Activated B cell treated with CpG ODN at 0.5 μM for 24 hours (primary cell): ENCODE measurements at regions of chr7 and their contacts with region 1.

Region 1: GRCh38 chr7:142782922-142783900 is 12.4 kb downstream of the PRSS2 start:
- DNase-seq: peak; percentile 71
- ATAC-seq: peak; percentile 91
- H3K4me3 Mint-ChIP-seq: peak overlapping the region; percentile 86
- H3K27ac Mint-ChIP-seq: peak overlapping the region; percentile 91
- H3K4me1 Mint-ChIP-seq: peaks cover 34% of the 10 kb centered on the region
- H3K27me3 Mint-ChIP-seq: no peaks in the 10 kb centered on the region
- CTCF ChIP-seq: peak; percentile 27

Region 2: DNA sequence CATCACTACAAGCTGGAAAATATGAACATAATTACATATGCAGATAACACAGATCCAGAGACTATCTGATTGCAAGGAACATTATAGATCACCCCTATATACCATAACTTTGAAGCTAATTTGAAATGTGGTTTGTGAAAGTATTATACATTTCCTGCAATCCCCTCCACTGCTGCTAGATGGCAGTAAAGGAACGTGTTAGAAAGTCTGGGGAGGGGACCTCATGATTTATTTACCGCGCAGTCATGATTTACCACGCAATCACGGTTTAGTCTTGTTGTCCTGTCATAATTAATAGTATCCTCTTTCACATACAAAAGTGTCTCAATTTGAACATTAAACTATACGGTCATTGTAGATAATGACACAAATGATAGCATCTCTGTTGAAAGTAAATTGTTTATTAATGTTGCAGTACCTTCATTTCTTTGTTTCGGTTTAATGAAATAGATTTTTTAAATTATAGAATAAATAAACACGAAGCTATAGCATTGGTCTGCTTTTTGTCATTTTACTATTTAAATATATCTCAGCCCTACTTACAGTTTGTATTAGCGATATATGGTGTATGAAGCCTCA is 179.3 kb before region 1 on chr7:
- CTCF ChIA-PET with region 1: interaction called, 14 read pairs
- POLR2A ChIA-PET with region 1: interaction called, 7 read pairs
- intact Hi-C with region 1: loop called (anchors 1 kb)
- DNase-seq: no peak
- ATAC-seq: no peak
- H3K4me3 Mint-ChIP-seq: no peak overlapping the region
- H3K27ac Mint-ChIP-seq: no peak overlapping the region
- H3K4me1 Mint-ChIP-seq: peaks cover 3% of the 10 kb centered on the region
- H3K27me3 Mint-ChIP-seq: peaks cover 35% of the 10 kb centered on the region
- CTCF ChIP-seq: peak; percentile 64

Region 3: DNA sequence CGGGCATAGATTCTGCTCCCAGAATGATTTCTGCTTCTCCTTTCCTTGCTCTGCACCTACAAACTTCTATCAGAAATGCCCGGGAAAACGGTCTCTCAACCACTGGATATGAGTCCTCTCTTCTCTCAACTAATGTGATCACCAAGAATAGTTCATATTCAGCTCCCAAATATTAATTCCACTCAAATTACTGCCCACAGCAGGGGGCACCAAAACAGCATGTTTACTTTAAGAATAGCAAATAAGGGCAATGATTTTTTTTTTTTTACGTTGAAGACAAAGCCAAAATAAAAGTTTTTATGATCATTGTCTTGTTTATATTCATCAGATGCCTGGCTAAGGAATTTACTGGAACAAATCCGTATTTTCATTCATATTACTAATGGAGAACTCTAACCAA is 128.8 kb before region 1 on chr7:
- CTCF ChIA-PET with region 1: interaction called, 7 read pairs
- POLR2A ChIA-PET with region 1: no interaction called
- intact Hi-C with region 1: loop called (anchors 1 kb)
- DNase-seq: no peak
- ATAC-seq: no peak
- H3K4me3 Mint-ChIP-seq: no peak overlapping the region
- H3K27ac Mint-ChIP-seq: no peak overlapping the region
- H3K4me1 Mint-ChIP-seq: no peaks in the 10 kb centered on the region
- H3K27me3 Mint-ChIP-seq: peaks cover 7% of the 10 kb centered on the region
- CTCF ChIP-seq: no peak

Region 4: DNA sequence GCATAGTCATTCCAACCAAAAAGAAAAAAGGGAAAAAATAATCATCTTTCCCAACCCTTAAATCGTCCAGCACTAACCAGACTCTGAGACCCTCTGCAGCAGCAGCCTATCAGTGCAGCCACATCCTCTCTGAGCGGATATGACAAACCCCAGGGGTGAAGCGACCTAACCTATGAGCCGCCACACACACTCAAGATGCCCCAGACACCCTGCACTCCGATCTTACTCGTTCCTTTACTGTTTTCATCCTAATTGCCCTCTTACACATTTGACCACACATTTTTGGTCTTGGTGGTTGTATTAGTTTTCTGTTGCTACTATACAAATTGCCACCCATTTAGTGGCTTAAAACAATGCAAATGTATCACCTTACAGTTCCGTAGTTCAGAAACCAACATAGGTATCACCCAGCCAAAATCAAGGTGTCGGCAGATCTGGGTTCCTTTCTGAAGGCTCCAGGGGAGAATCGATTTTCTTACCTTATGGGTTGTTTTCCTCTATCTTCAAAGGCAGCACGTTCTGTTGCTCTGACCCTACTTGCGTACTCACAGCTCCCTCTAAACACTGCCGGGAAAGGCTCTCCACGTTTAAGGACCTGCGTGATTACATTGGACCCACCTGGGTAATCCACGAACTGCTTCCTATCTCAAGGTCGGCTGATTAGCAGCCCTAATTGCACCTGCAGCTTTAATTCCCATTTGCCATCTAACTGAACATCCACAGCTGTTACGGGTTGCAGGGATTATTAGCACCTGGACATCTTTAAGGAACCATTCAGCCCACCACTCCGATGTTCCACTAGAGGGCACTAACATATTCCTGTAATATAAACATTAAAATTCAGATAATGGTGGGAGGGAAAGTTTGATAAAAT is 71.2 kb before region 1 on chr7:
- CTCF ChIA-PET with region 1: interaction called, 168 read pairs
- POLR2A ChIA-PET with region 1: interaction called, 38 read pairs
- intact Hi-C with region 1: loop called (anchors 1 kb)
- DNase-seq: no peak
- ATAC-seq: peak; percentile 25
- H3K4me3 Mint-ChIP-seq: peak overlapping the region; percentile 63
- H3K27ac Mint-ChIP-seq: no peak overlapping the region
- H3K4me1 Mint-ChIP-seq: peaks cover 27% of the 10 kb centered on the region
- H3K27me3 Mint-ChIP-seq: no peaks in the 10 kb centered on the region
- CTCF ChIP-seq: no peak

Region 5: DNA sequence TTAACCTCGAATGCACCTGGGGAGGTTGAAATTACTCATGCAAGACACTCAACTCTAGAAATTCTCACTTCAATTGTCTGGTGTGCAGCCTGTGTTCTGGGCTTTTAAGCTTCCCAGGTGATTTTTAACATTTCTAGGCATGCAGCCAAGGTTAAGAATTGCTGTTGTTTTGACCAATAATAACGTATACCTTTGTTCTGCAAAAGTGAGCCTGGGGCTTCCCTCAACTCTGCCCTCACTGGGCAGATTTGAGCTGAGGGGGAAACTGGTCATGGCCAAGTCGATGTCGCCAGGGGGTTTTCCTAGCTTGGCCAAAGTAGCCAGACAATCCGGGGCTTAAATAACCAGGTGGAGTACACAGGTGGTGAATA is 11.9 kb before region 1 on chr7:
- CTCF ChIA-PET with region 1: interaction called, 17 read pairs
- POLR2A ChIA-PET with region 1: interaction called, 10 read pairs
- intact Hi-C with region 1: no loop called
- DNase-seq: no peak
- ATAC-seq: peak; percentile 85
- H3K4me3 Mint-ChIP-seq: peak overlapping the region; percentile 32
- H3K27ac Mint-ChIP-seq: no peak overlapping the region
- H3K4me1 Mint-ChIP-seq: peaks cover 23% of the 10 kb centered on the region
- H3K27me3 Mint-ChIP-seq: peaks cover 9% of the 10 kb centered on the region
- CTCF ChIP-seq: no peak

Region 6: GRCh38 chr7:142853739-142854371 is 70.6 kb after region 1 on chr7:
- CTCF ChIA-PET with region 1: interaction called, 12 read pairs
- POLR2A ChIA-PET with region 1: interaction called, 32 read pairs
- intact Hi-C with region 1: loop called (anchors 1 kb)
- DNase-seq: peak; percentile 76
- ATAC-seq: peak; percentile 88
- H3K4me3 Mint-ChIP-seq: peak overlapping the region; percentile 97
- H3K27ac Mint-ChIP-seq: peak overlapping the region; percentile 95
- H3K4me1 Mint-ChIP-seq: peaks cover 27% of the 10 kb centered on the region
- H3K27me3 Mint-ChIP-seq: no peaks in the 10 kb centered on the region
- CTCF ChIP-seq: peak; percentile 61

Region 7: DNA sequence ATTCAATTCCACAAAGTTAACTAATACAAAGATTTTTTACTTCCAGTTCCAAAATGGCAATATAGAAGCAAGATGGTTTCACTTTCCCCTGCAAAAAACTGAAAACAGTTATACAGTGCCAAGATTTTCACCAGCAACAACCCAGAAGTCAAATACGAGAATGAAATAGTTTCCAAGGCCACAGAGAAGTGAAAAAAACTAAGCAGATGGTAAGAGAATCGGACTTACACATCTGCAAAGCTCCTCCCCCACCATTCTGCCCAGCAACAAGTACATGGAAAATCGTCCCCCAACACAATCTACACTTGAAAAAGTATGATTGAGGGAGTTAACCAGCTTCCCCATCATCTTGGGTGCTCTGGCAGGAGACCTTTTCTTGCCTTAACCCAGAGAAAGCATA is 209.3 kb after region 1 on chr7:
- CTCF ChIA-PET with region 1: no interaction called
- POLR2A ChIA-PET with region 1: no interaction called
- intact Hi-C with region 1: no loop called
- DNase-seq: no peak
- ATAC-seq: no peak
- H3K4me3 Mint-ChIP-seq: no peak overlapping the region
- H3K27ac Mint-ChIP-seq: no peak overlapping the region
- H3K4me1 Mint-ChIP-seq: peaks cover 7% of the 10 kb centered on the region
- H3K27me3 Mint-ChIP-seq: peaks cover 11% of the 10 kb centered on the region
- CTCF ChIP-seq: no peak

Region 8: GRCh38 chr7:143345428-143345900 is 562.3 kb after region 1 on chr7:
- CTCF ChIA-PET with region 1: no interaction called
- POLR2A ChIA-PET with region 1: no interaction called
- intact Hi-C with region 1: no loop called
- DNase-seq: no peak
- ATAC-seq: peak; percentile 91
- H3K4me3 Mint-ChIP-seq: peak overlapping the region; percentile 64
- H3K27ac Mint-ChIP-seq: no peak overlapping the region
- H3K4me1 Mint-ChIP-seq: peaks cover 6% of the 10 kb centered on the region
- H3K27me3 Mint-ChIP-seq: peaks cover 27% of the 10 kb centered on the region
- CTCF ChIP-seq: no peak